Body of pancreas (tissue), 4 donors: ENCODE measurements at regions of chr15 and their contacts with region 1.

Region 1: GRCh38 chr15:66862878-66863335 is 160.9 kb downstream of the SMAD6 start:
- DNase-seq: peak; percentile 77 to 81 (median 80)
- ATAC-seq: peak; percentile 88
- H3K4me3 ChIP-seq: no peak overlapping the region
- H3K27ac ChIP-seq: no peak overlapping the region
- H3K4me1 ChIP-seq: no peaks in the 10 kb centered on the region
- H3K27me3 ChIP-seq: no peaks in the 10 kb centered on the region
- CTCF ChIP-seq: peak; percentile 81 to 94 (median 88)
- POLR2A ChIP-seq: no peak

Region 2: GRCh38 chr15:66603301-66604179 is 259.4 kb before region 1 on chr15:
- intact Hi-C with region 1: loop called (anchors 5 kb)
- DNase-seq: peak; percentile 58 to 74 (median 61)
- ATAC-seq: peak; percentile 70
- H3K4me3 ChIP-seq: no peak overlapping the region
- H3K27ac ChIP-seq: no peak overlapping the region
- H3K4me1 ChIP-seq: no peaks in the 10 kb centered on the region
- H3K27me3 ChIP-seq: no peaks in the 10 kb centered on the region
- CTCF ChIP-seq: peak; percentile 58 to 79 (median 69)
- POLR2A ChIP-seq: no peak

Region 3: DNA sequence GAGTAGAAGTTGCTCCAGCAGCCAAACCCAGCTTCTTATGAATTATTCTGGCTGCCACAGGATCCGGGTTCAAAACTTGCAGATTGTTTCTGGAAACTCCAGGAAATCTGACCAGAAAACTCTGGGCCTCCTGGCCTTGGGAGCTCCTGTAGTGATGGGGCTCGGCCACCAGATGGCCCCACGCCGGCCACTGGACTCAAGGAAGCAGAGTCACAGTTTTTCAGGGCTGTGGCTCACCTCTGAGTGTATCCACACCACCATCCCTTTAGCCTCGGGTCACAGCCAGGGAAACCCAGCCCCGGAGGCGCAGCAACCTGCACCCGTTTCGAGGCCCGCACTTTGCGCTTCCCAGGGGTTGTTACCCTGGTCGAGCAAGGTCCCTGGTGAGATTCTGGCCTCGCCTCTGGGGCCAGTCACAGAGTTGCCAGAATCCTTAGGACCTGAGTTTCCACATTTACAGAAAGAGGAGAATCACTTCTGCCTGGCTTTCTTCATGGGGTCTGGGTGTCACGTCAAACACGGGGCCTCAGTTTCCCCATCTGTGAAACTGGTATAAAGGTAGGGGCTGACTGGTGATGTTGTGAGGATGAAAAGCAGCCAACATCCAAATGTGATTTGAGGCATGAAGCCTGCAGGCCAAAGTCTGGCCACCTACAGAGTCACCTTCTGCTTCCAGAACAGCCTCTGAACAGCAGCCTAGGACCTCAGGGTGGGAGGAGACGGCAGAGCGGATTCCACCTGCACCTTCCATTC is 243.6 kb before region 1 on chr15:
- intact Hi-C with region 1: no loop called
- DNase-seq: peak; percentile 82 to 87 (median 83)
- ATAC-seq: peak; percentile 91
- H3K4me3 ChIP-seq: no peak overlapping the region
- H3K27ac ChIP-seq: no peak overlapping the region
- H3K4me1 ChIP-seq: peaks cover 16% of the 10 kb centered on the region
- H3K27me3 ChIP-seq: no peaks in the 10 kb centered on the region
- CTCF ChIP-seq: peak; percentile 70 to 91 (median 84)
- POLR2A ChIP-seq: no peak

Region 4: GRCh38 chr15:67033571-67034044 is 170.7 kb after region 1 on chr15:
- intact Hi-C with region 1: no loop called
- DNase-seq: no peak
- ATAC-seq: no peak
- H3K4me3 ChIP-seq: no peak overlapping the region
- H3K27ac ChIP-seq: no peak overlapping the region
- H3K4me1 ChIP-seq: peaks cover 35% of the 10 kb centered on the region
- H3K27me3 ChIP-seq: no peaks in the 10 kb centered on the region
- CTCF ChIP-seq: no peak
- POLR2A ChIP-seq: no peak

Region 5: GRCh38 chr15:67109141-67110034 is 246.5 kb after region 1 on chr15:
- intact Hi-C with region 1: no loop called
- DNase-seq: peak; percentile 45 to 76 (median 60)
- ATAC-seq: peak; percentile 9
- H3K4me3 ChIP-seq: no peak overlapping the region
- H3K27ac ChIP-seq: peak overlapping the region; percentile 45 to 90 (median 86)
- H3K4me1 ChIP-seq: peaks cover 58% of the 10 kb centered on the region
- H3K27me3 ChIP-seq: no peaks in the 10 kb centered on the region
- CTCF ChIP-seq: no peak
- POLR2A ChIP-seq: no peak